Cardiac septum (tissue), 1 donor: ENCODE measurements at regions of chr14 and their contacts with region 1.

Region 1: DNA sequence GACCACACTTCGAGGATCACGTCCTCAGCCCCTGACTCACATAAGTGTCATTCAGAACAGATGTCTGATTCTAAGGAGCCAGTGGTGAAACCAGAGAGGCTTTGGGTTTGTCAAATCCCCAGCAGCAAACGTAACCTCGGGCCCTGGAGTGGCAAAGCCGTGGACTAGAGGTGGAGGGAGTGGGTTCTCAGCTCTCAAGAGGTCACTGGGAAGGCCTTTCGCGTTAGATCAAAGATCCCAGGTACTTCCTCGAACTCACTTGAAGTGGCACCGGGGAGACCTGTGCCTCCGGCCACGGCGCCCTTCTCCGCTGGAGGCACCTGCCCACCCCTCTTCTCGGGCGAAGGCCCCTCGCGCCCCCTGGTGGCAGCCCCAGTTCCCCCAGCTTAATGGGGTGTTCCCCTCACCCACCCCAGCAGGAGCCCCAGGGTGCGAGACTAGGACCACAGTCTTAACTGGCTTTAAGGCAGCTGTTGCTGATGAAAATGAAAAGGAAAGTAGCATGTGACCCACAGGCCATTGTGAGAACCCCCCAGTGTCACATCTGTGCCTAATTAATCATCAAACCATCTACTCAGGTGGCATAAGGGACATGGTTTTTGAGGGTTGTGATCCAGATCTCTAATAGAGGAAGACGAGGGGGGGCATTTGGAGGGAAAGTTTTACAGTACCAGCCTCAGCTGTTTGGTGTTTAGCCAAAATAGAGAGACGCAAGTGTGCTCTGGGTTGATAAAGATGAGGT is 672 bp upstream of the ESR2 start:
- DNase-seq: peak; percentile 84

Region 2: GRCh38 chr14:63795532-63795931 is 499.3 kb before region 1 on chr14:
- intact Hi-C with region 1: loop called (anchors 5 kb)
- DNase-seq: no peak

Region 3: GRCh38 chr14:64040044-64040443 is 254.8 kb before region 1 on chr14:
- intact Hi-C with region 1: loop called (anchors 10 kb)
- DNase-seq: no peak

Region 4: DNA sequence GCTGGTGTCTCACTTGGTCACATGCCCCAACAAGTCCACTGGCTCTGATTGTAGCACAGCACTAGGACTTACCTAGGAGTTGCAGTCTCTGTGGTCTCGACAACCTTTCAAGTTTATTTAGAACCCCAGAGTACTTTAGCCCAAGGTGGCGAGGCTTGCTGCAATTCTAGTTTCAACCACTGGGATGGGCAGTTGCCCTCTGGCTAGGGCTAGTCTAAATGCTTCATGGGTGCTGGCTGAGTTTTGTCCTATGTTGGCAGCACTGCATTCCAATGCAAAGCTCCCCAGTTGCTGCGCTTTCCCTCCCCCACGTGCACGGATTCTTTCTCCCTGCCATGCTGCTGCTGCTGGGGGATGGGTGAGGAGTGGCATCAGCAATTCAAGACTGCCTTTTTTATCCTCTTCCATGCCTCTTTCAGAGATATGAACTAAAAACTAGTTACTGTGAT is 234.2 kb before region 1 on chr14:
- intact Hi-C with region 1: no loop called
- DNase-seq: no peak

Region 5: DNA sequence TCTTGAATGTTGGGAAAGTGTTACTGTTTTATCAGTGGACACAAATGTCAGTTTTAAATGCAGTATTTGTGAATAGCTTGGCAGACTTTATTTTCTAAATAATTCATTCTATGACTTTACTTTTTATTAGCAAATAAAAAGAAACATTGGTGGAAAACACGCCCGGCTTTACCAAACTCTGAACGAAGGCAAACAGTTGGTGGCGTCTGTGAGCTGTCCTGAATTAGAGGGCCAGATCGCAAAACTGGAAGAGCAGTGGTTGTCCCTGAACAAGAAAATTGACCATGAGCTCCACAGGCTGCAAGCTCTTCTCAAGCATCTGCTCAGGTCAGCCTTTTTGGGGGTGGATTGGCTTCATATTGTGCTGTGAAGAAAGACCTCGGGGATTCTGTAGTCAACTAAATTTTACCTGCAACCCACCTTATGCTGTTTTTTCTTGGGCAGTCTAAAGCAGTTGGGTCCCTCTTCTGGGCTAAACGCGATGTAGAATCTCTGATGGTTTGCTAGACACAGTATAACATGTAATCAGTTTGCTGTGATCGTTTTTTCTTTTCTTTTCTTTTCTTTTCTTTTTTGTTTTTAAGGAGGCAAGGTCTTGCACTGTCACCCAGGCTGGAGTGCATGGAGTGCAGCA is 157.1 kb before region 1 on chr14:
- intact Hi-C with region 1: loop called (anchors 5 kb)
- DNase-seq: no peak

Region 6: DNA sequence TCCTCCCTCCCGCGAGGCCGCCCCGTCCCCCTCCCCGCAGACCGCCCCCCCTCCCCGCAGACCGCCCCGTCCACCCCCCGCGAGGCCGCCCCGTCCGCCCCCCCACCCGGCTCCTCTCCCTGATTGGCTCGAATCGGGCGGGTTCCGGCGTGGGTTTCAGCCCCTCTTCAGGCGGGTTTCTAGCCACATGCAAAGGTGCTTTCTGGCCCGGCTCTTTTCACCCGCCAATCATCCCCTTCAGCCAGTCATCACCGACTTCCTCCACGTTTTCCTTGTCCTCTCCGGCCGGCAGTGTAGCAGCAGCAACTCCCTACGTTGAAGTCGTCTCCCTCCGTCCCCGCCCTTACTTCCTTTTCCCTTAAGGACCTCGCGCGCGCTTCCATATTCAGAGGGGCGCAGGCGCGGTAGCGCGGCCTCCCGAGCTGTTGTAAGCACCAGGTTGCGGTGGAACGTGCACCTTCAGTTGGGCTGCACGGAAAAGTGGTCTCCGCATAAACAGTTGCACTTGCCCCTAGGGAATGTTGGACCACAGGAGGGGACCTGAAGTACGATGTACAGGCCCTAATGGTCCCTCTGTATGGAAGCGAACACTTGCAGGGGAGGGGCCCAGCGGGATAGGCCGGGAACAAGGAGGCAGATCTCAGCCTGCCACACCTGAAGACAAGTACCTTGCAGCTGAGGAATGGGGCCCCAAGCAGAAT is 43.9 kb after region 1 on chr14:
- intact Hi-C with region 1: no loop called
- DNase-seq: peak; percentile 95